ENCODE measurements at regions of chr15 and their contacts with region 1.

Region 1: DNA sequence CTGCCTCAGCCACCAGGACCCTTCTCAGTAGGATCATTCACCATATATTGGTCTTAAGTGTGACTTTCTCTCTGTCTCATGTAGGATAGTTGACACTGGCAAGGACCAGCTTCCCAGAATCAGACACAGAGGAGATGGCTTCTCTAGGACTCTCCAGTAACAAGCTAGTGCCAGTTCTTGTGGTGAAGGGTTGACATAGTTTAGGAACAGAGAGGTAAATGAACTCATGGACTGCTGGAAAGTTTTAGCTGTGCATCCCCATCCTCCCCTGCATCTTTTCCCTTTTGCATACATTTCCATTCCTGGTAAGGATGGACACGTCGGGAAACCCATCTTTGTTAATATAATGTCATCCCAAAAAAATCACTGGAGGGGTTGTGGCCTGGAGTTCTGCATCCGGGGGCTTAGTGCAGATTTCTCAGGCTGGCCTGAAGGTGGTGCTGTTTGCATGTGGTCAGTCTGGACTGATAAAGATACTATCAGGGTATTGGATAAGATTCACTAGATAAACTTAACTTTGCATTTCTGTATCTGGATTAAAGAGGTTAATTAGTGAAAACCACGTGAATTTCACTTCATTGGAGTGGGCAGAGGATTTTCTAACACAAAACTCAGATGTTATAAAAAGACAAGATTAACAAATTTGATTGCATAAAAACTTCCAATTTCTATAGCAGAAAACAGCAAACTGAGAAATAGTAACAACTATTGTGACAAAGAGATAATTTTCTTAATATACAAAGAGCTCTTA is 110.8 kb downstream of the TBC1D2B start:
- DNase-seq: peak; percentile 73

Region 2: DNA sequence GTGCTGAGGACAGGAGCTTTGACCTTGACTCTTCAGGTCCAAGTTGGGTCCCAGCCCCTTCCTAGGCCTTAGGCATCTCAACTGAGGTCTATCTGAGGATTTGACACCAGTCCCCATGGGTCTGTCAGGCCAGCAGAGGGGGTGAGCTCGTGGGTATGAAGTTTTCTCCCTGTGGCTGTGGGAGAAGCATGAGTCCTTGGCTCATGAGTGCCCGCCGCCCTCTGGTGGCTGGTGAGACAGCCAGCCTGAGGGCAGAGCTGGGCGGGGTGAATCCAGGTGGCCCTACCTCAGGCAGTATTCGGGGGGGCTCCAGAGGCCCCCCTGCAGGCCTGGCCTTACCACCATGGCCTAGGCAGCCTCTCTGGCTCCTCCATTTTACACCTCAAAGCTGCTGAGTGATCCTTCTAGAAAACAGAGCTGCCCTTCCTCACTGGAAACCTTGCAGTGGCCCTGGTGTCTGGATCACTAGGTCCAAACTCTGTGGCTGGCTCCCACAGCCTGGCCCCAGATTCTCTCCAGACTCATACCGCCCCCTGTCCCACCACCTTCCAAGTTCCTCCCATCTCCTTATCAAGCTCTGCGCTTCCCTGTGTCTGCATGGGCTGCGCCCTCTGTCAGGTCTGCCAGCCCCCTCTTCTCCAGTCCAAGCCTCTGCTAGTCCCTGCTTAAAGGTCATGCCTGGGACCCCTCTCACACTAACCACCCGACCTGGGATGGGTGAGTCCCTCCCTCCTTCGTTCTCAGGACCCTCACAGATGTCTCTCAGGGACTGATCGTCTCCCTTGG is 141.8 kb after region 1 on chr15:
- intact Hi-C with region 1: loop called (anchors 2 kb)
- DNase-seq: peak; percentile 95